Endothelial cell of umbilical vein (primary cell): ENCODE measurements at regions of chr19 and their contacts with region 1.

Region 1: GRCh38 chr19:7943444-7944176 is at the start of gene TIMM44:
- DNase-seq: peak; percentile 99
- H3K4me3 ChIP-seq: peak within 1 kb of the TSS; percentile 73 to 93 (median 88)
- H3K27ac ChIP-seq: peak within 1 kb of the TSS; percentile 89
- H3K4me1 ChIP-seq: peaks cover 9% of the 10 kb centered on the region
- H3K27me3 ChIP-seq: no peaks in the 10 kb centered on the region
- CTCF ChIP-seq: no peak
- POLR2A ChIP-seq: peak; percentile 96
- total RNA-seq, gene TIMM44: 61.5 and 62.9 TPM in 2 replicates

Region 2: DNA sequence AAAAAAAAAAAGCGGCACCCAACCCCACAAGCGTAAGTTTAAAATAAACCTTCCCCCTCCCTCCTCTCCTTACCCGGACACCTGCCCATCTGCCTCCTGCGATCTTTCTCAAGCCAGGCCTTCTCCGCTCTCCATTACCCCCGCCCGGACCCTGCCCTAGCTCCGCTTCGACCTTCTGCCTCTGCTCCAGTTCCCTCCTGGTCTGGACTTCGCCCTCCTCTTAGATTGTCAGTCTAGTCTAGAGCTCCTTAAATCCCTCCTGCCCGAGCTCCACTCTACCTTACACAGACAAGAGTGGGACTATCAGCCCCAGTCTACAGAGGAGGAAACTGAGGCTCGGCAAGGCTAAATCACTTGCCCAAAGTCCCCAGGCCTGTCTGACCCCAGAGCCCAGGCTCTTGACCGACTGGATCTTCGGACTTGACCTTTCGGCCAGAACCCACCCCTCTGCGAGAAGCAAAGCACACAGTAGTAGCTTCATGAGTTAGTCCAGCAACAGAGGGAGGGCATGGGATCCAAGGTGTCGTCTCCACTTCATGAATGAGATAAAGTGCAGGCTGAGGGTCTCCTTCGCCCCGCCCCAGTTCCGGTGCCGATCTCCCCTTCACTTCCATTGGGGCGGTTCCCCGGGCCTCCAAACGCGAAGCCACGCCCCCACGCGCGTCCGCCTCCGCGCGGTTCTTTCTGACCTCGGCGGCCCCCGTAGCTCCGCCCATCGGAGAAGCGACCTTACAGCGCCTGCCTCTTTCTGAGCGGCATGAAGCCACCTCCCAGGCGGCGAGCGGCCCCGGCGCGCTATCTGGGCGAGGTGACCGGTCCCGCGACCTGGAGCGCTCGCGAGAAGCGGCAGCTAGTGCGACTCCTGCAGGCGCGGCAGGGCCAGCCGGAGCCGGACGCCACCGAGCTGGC is 23.7 kb before region 1 on chr19 and contains the start of gene SNAPC2:
- CTCF ChIA-PET with region 1: interaction called, 34 read pairs
- POLR2A ChIA-PET with region 1: interaction called, 9 read pairs
- dilution Hi-C with region 1: no loop called
- intact Hi-C with region 1: loop called (anchors 1 kb)
- DNase-seq: peak; percentile 94
- H3K4me3 ChIP-seq: peak within 1 kb of the TSS; percentile 61 to 79 (median 63)
- H3K27ac ChIP-seq: peak within 1 kb of the TSS; percentile 13
- H3K4me1 ChIP-seq: peaks cover 22% of the 10 kb centered on the region
- H3K27me3 ChIP-seq: peaks cover 18 to 31% of the 10 kb centered on the region in 2 experiments
- CTCF ChIP-seq: no peak
- POLR2A ChIP-seq: peak; percentile 68
- total RNA-seq, gene SNAPC2: 23.7 and 29.2 TPM in 2 replicates

Region 3: DNA sequence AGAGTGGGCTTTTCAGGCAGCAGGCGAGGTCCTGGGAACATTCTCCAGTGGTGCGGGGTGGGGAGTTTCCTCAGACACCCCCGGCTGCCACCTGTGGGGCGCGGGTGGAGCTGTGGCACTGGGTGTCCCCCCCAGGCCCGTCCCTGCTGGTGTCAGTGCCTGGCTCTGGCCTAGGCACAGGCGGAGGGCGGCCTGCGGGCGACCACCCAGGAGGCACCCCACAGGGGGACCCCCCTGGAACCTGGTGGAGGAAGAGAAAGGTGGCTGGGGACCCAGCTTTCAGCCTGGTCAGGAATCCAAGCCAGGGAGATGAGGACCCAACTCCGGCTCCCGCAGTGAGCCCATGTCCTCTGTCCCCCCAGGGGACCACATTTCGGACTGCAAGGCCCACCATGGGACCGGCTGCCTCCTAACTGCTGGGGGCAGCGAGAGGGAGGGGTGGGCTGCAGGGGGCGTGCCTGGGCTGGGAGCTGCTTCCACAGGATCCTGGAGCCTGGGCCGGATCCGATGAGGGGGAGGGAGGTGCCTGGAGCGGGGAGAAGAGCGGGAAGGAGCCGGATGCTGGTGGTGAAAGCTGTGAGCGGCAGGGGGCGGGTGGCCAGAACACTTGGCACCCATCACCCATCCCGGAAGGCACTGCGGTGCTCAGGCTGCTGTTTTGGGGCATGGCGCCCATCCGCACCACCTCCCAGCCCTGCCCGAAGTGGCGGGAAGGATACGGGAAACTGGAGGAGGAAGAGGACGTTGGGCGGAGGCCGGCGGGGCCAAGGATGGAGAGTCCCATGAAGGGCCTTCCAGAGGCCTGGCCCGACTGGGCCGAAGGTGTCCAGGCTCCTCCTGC is 12.2 kb before region 1 on chr19:
- CTCF ChIA-PET with region 1: interaction called, 41 read pairs
- POLR2A ChIA-PET with region 1: interaction called, 21 read pairs
- dilution Hi-C with region 1: no loop called
- intact Hi-C with region 1: loop called (anchors 1 kb)
- DNase-seq: no peak
- H3K4me3 ChIP-seq: no peak overlapping the region
- H3K27ac ChIP-seq: no peak overlapping the region
- H3K4me1 ChIP-seq: peaks cover 14% of the 10 kb centered on the region
- H3K27me3 ChIP-seq: no peaks in the 10 kb centered on the region
- CTCF ChIP-seq: no peak
- POLR2A ChIP-seq: no peak

Region 4: DNA sequence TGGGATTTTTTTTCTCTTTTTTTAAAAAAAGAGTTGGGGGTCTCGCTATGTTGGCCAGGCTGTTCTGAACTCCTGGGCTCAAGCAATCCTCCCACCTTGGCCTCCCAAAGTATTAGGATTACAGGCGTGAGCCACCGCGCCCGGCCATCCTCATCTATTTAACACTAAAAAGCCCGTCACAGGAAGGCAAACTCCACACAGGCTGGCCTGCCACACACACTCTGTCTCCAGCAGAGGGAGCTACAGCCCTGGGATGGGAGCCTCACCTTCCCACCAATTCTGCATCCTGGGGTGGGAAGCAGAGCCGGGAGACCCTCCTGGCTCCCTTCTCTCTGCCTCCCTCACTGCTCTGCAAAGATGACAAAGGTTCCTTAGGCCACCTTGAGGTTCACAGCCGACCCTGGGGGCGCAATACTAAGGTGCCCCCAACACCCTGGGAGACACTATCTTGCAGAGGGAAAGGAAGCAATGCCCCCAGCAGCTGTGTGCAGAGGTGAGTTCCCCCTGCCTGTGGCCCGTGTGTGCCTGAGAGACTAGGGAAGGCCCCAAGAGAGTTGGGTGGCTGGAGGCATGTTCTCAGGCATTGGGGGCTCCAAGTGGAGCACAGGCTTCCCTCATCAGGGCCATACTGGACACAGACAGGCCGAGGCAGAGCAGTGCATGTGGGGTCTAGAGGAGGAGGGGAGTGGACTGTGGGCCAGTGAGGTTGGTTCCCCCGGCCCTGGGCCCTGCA is 27.3 kb after region 1 on chr19:
- CTCF ChIA-PET with region 1: interaction called, 40 read pairs
- POLR2A ChIA-PET with region 1: interaction called, 4 read pairs
- dilution Hi-C with region 1: no loop called
- intact Hi-C with region 1: no loop called
- DNase-seq: peak; percentile 27
- H3K4me3 ChIP-seq: no peak overlapping the region
- H3K27ac ChIP-seq: no peak overlapping the region
- H3K4me1 ChIP-seq: no peaks in the 10 kb centered on the region
- H3K27me3 ChIP-seq: no peaks in the 10 kb centered on the region
- CTCF ChIP-seq: peak; percentile 67 to 88
- POLR2A ChIP-seq: no peak

Region 5: GRCh38 chr19:8005534-8006256 is 62.1 kb after region 1 on chr19 and contains the start of gene ELAVL1:
- CTCF ChIA-PET with region 1: interaction called, 62 read pairs
- POLR2A ChIA-PET with region 1: interaction called, 4 read pairs
- dilution Hi-C with region 1: no loop called
- intact Hi-C with region 1: loop called (anchors 1 kb)
- DNase-seq: peak; percentile 88
- H3K4me3 ChIP-seq: peak within 1 kb of the TSS; percentile 81 to 96 (median 84)
- H3K27ac ChIP-seq: peak within 1 kb of the TSS; percentile 53
- H3K4me1 ChIP-seq: peaks cover 22% of the 10 kb centered on the region
- H3K27me3 ChIP-seq: no peaks in the 10 kb centered on the region
- CTCF ChIP-seq: no peak
- POLR2A ChIP-seq: peak; percentile 67
- total RNA-seq, gene ELAVL1: 124 and 134 TPM in 2 replicates

Region 6: GRCh38 chr19:8158411-8159074 is 214.9 kb after region 1 on chr19:
- CTCF ChIA-PET with region 1: interaction called, 34 read pairs
- POLR2A ChIA-PET with region 1: no interaction called
- dilution Hi-C with region 1: no loop called
- intact Hi-C with region 1: loop called (anchors 1 kb)
- DNase-seq: peak; percentile 59
- H3K4me3 ChIP-seq: no peak overlapping the region
- H3K27ac ChIP-seq: no peak overlapping the region
- H3K4me1 ChIP-seq: peaks cover 3% of the 10 kb centered on the region
- H3K27me3 ChIP-seq: no peaks in the 10 kb centered on the region
- CTCF ChIP-seq: peak; percentile 45 to 62
- POLR2A ChIP-seq: no peak

Region 7: DNA sequence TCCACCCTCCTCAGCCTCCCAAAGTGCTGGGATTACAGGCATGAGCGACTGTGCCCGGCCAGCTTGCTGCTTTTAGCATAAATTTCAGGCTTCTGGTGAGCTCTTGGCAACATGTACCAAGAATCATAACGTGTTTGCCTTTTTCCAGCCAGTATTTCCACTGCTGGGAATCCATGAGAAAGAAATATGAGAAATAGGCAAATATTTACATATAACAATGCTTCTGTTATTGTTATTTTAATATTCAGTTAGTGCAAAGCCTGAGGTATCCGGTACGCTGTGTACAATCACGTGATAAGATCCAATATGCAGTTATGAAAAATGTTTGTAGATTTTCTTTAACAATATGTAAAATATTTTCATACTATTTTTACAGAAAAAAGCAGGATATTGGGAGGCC is 236.5 kb after region 1 on chr19:
- CTCF ChIA-PET with region 1: no interaction called
- POLR2A ChIA-PET with region 1: no interaction called
- dilution Hi-C with region 1: no loop called
- intact Hi-C with region 1: no loop called
- DNase-seq: no peak
- H3K4me3 ChIP-seq: no peak overlapping the region
- H3K27ac ChIP-seq: no peak overlapping the region
- H3K4me1 ChIP-seq: no peaks in the 10 kb centered on the region
- H3K27me3 ChIP-seq: no peaks in the 10 kb centered on the region
- CTCF ChIP-seq: no peak
- POLR2A ChIP-seq: no peak